CD8-positive, alpha-beta memory T cell (primary cell): ENCODE measurements at regions of chr1 and their contacts with region 1.

Region 1: GRCh38 chr1:165392634-165393571 is 36.4 kb upstream of the LMX1A start:
- DNase-seq: peak; percentile 85 to 94 (median 89)
- H3K4me3 ChIP-seq: peak overlapping the region; percentile 5
- H3K4me3 Mint-ChIP-seq: peak overlapping the region; percentile 55 to 84 (median 79)
- H3K27ac ChIP-seq: no peak overlapping the region
- H3K27ac Mint-ChIP-seq: peak overlapping the region in 7 of 8 donors; percentile 59 to 95 (median 81)
- H3K4me1 ChIP-seq: peaks cover 16% of the 10 kb centered on the region
- H3K4me1 Mint-ChIP-seq: peaks cover 11 to 19% (median 15%) of the 10 kb centered on the region in 3 donors
- H3K27me3 ChIP-seq: peaks cover 7% of the 10 kb centered on the region
- H3K27me3 Mint-ChIP-seq: peaks cover 25 to 71% of the 10 kb centered on the region in 2 donors

Region 2: GRCh38 chr1:164876398-164877116 is 516.3 kb before region 1 on chr1:
- CTCF ChIA-PET with region 1: no interaction called
- POLR2A ChIA-PET with region 1: no interaction called
- DNase-seq: no peak
- H3K4me3 ChIP-seq: no peak overlapping the region
- H3K4me3 Mint-ChIP-seq: no peak overlapping the region
- H3K27ac ChIP-seq: no peak overlapping the region
- H3K27ac Mint-ChIP-seq: no peak overlapping the region
- H3K4me1 ChIP-seq: no peaks in the 10 kb centered on the region
- H3K4me1 Mint-ChIP-seq: no peaks in the 10 kb centered on the region
- H3K27me3 ChIP-seq: no peaks in the 10 kb centered on the region
- H3K27me3 Mint-ChIP-seq: peaks cover 0 to 4% of the 10 kb centered on the region in 2 donors

Region 3: DNA sequence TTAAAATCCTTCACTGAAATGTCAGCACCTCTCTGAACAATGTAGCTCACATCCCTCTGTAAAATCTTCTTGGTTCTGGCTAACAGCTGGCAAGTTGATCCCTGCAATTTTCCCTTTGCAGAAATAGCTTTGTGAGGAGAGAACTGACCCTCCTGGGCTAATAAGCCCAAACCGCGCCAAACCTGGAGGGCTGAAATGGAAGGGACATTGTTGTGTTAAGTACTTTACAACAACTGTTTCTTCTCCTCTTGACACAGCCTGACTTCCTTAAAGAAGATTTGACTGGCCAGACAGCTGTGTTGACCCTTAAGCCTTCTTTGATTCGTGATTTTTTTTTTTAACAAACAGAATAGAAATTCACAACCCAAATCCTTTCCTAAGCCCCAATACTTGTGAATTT is 42.1 kb before region 1 on chr1:
- CTCF ChIA-PET with region 1: no interaction called
- POLR2A ChIA-PET with region 1: no interaction called
- DNase-seq: no peak
- H3K4me3 ChIP-seq: no peak overlapping the region
- H3K4me3 Mint-ChIP-seq: no peak overlapping the region
- H3K27ac ChIP-seq: no peak overlapping the region
- H3K27ac Mint-ChIP-seq: no peak overlapping the region
- H3K4me1 ChIP-seq: no peaks in the 10 kb centered on the region
- H3K4me1 Mint-ChIP-seq: peaks cover 9 to 23% (median 11%) of the 10 kb centered on the region in 3 donors
- H3K27me3 ChIP-seq: peaks cover 27% of the 10 kb centered on the region
- H3K27me3 Mint-ChIP-seq: peaks cover 42 to 91% of the 10 kb centered on the region in 2 donors

Region 4: DNA sequence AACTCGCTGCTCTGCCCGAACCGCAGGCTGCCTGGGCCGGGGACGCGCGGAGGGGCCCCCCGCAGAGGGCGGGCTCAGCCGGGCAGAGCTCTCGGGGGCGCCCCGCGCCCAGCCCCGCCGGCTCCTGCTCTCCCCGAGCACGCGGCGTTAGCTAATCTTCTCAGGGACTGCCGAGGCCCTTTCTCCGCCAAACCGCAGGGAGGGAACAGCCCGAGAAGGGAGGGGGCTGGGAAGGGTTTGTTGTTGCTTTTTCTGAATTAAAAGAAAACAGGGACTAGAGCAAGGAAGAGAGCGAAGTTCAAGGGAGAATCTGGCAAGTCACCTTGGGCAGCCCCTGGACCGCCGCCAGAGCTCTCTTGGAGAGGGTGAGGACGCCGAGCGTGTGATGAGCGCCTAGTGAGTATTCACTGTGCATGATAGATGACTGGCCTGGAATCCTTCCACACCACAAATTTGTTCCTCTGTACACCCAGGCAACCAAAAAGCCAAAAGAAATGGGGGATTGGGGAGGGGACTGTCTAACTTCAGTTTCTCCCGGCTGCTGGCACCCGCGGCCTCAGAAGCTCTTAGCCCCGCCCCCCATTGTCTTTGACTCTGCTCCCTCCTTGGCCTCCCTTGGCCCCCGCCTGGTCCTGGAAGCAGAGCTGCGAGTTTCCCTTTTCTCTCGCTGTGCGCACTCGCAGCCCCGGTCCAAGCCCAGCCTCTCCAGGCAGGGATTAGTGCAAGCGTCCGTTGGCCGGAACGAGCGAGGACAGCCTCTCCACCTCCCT is 16.7 kb before region 1 on chr1:
- CTCF ChIA-PET with region 1: interaction called, 11 read pairs
- POLR2A ChIA-PET with region 1: no interaction called
- DNase-seq: no peak
- H3K4me3 ChIP-seq: no peak overlapping the region
- H3K4me3 Mint-ChIP-seq: peak overlapping the region; percentile 1 to 90 (median 77)
- H3K27ac ChIP-seq: no peak overlapping the region
- H3K27ac Mint-ChIP-seq: peak overlapping the region in 1 of 8 donors; percentile 52
- H3K4me1 ChIP-seq: peaks cover 20% of the 10 kb centered on the region
- H3K4me1 Mint-ChIP-seq: peaks cover 15 to 19% (median 19%) of the 10 kb centered on the region in 3 donors
- H3K27me3 ChIP-seq: peaks cover 18% of the 10 kb centered on the region
- H3K27me3 Mint-ChIP-seq: peaks cover 53 to 69% of the 10 kb centered on the region in 2 donors